ENCODE measurements at regions of chr7 and their contacts with region 1.

Region 1: DNA sequence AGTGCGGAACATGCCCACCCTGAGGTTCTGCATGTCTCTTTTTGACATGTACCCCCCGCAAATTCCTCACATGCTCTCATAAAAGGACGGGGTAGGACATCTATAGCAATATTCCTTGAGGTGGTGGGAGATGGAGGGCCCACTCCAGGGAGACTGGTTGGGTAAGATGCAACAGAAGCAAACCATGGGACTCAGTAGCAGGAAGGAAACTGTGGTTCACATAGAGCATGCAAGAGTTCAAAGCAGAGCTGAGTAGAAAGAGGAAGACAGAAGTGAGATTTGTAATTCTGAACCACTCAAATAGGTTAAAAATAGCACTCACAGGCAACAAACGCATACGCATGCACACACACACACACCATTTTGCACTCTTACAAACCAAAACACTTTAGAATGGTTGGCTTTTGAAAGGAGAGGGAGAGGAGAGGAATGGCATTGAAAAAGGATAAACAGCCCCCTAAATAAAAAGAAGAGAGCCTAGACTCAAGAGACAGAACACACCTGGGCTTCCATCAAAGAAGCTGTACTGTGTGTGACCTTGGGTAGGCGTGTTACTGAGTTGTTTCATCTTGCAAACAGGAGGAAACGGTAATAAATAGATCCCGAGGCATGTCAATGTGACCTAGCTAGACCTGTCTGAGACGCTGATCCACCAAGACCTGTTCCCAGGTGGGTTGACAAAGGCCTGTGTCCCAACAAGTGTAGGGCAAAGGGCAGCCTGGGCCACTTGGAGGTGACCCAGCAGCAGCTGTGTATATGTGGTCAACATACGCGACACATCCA is 77.6 kb upstream of the LRRC4 start:
- DNase-seq: peak in 7 of 9 donors; percentile 49 to 83 (median 77)
- ATAC-seq: peak; percentile 90
- H3K4me3 ChIP-seq: peak overlapping the region; percentile 41
- H3K4me3 Mint-ChIP-seq: peak overlapping the region; percentile 65 to 90 (median 79)
- H3K27ac ChIP-seq: peak overlapping the region; percentile 52
- H3K27ac Mint-ChIP-seq: peak overlapping the region; percentile 51 to 94 (median 86)
- H3K4me1 ChIP-seq: peaks cover 33 to 67% of the 10 kb centered on the region in 2 donors
- H3K4me1 Mint-ChIP-seq: peaks cover 54 to 86% (median 82%) of the 10 kb centered on the region in 7 donors
- H3K27me3 ChIP-seq: no peaks in the 10 kb centered on the region
- H3K27me3 Mint-ChIP-seq: peaks cover 0 to 24% (median 0%) of the 10 kb centered on the region in 5 donors

Region 2: GRCh38 chr7:127995156-127995880 is 113.5 kb before region 1 on chr7:
- CTCF ChIA-PET with region 1: no interaction called
- POLR2A ChIA-PET with region 1: no interaction called
- intact Hi-C with region 1: no loop called
- DNase-seq: no peak
- ATAC-seq: no peak
- H3K4me3 ChIP-seq: no peak overlapping the region
- H3K4me3 Mint-ChIP-seq: no peak overlapping the region
- H3K27ac ChIP-seq: no peak overlapping the region
- H3K27ac Mint-ChIP-seq: no peak overlapping the region
- H3K4me1 ChIP-seq: no peaks in the 10 kb centered on the region
- H3K4me1 Mint-ChIP-seq: peaks cover 0 to 12% (median 0%) of the 10 kb centered on the region in 7 donors
- H3K27me3 ChIP-seq: no peaks in the 10 kb centered on the region
- H3K27me3 Mint-ChIP-seq: no peaks in the 10 kb centered on the region

Region 3: GRCh38 chr7:128031901-128032604 is 76.8 kb before region 1 on chr7:
- CTCF ChIA-PET with region 1: interaction called, 3 read pairs
- POLR2A ChIA-PET with region 1: no interaction called
- intact Hi-C with region 1: loop called in 1 of 2 experiments (anchors 5 kb)
- DNase-seq: peak; percentile 29 to 63 (median 53)
- ATAC-seq: peak; percentile 92
- H3K4me3 ChIP-seq: peak overlapping the region; percentile 61
- H3K4me3 Mint-ChIP-seq: peak overlapping the region; percentile 84 to 97 (median 92)
- H3K27ac ChIP-seq: no peak overlapping the region
- H3K27ac Mint-ChIP-seq: peak overlapping the region in 3 of 9 donors; percentile 74 to 76 (median 74)
- H3K4me1 ChIP-seq: no peaks in the 10 kb centered on the region
- H3K4me1 Mint-ChIP-seq: peaks cover 6 to 36% (median 23%) of the 10 kb centered on the region in 7 donors
- H3K27me3 ChIP-seq: no peaks in the 10 kb centered on the region
- H3K27me3 Mint-ChIP-seq: peaks cover 0 to 34% (median 7%) of the 10 kb centered on the region in 5 donors

Region 4: DNA sequence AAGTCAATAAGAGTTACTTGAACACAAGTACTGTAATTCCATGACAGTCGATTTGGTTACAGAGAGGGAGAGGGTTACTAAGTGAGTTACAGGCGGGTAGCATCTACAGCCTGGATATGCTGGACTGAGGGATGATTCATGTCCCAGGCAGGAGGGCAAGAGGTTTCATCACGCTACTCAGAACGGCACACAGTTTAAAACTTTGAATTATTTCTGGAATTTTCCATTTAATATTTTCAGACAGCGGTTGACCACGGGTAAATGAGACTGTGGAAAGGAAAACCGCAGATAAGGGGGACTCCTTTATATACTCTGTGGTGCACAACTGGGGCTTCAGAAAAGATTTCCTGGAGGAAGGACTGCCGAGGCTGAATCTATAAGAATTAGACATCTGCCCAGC is 51.9 kb before region 1 on chr7:
- CTCF ChIA-PET with region 1: interaction called, 4 read pairs
- POLR2A ChIA-PET with region 1: interaction called, 6 read pairs
- intact Hi-C with region 1: loop called (anchors 1 to 5 kb)
- DNase-seq: no peak
- ATAC-seq: no peak
- H3K4me3 ChIP-seq: no peak overlapping the region
- H3K4me3 Mint-ChIP-seq: no peak overlapping the region
- H3K27ac ChIP-seq: no peak overlapping the region
- H3K27ac Mint-ChIP-seq: peak overlapping the region in 2 of 9 donors; percentile 32
- H3K4me1 ChIP-seq: peaks cover 23 to 58% of the 10 kb centered on the region in 2 donors
- H3K4me1 Mint-ChIP-seq: peaks cover 44 to 97% (median 78%) of the 10 kb centered on the region in 7 donors
- H3K27me3 ChIP-seq: no peaks in the 10 kb centered on the region
- H3K27me3 Mint-ChIP-seq: no peaks in the 10 kb centered on the region

Region 5: GRCh38 chr7:128168667-128169210 is 59.9 kb after region 1 on chr7:
- CTCF ChIA-PET with region 1: no interaction called
- POLR2A ChIA-PET with region 1: interaction called, 3 read pairs
- intact Hi-C with region 1: loop called in 1 of 2 experiments (anchors 2 kb)
- DNase-seq: peak in 3 of 9 donors; percentile 9 to 34 (median 12)
- ATAC-seq: no peak
- H3K4me3 ChIP-seq: no peak overlapping the region
- H3K4me3 Mint-ChIP-seq: peak overlapping the region in 9 of 10 donors; percentile 2 to 88 (median 67)
- H3K27ac ChIP-seq: no peak overlapping the region
- H3K27ac Mint-ChIP-seq: no peak overlapping the region
- H3K4me1 ChIP-seq: peaks cover 3 to 4% of the 10 kb centered on the region in 2 donors
- H3K4me1 Mint-ChIP-seq: peaks cover 3 to 28% (median 22%) of the 10 kb centered on the region in 7 donors
- H3K27me3 ChIP-seq: peaks cover 0 to 28% of the 10 kb centered on the region in 2 donors
- H3K27me3 Mint-ChIP-seq: peaks cover 38 to 55% (median 49%) of the 10 kb centered on the region in 5 donors